CD4-positive, alpha-beta T cell (primary cell): ENCODE measurements at regions of chr10 and their contacts with region 1.

Region 1: DNA sequence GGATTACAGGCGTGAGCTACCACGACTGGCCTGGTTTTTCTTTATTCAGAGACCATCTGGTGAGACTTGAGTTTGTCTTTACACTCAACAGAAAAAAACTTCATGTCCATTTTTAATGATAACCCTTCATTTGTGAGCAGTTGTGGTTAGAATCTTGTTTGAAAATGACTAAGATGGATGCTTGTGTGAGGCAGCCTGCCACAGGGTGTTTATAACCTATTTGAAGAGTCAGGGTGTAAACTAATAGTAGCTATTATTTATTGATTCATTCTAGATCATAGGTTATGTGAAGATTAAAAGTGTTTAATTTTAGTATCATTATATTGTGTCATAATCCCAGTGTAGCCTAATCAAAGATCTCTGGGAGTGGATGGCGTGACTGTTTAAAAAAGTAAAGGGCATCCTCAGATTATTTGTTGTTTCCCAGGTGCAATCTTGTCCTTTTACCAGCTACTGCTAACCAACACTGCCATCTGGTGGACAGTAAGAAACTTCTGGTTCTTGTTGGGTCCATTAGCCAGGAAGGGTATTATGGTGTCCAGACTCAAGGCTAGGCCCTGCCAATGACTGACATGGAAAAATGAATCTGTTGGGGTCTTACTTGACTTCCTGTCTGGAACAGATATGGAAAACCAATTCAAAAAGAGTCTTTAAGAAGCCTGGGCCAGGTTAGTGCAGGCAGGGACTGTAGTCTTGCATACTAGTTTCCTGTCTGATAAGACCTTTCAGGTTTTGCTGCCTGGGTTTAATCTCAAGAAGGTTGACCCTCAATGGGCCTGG is 24.9 kb downstream of the NRBF2 start:
- DNase-seq: peak in 11 of 14 experiments; percentile 10 to 89 (median 36)
- ATAC-seq: peak; percentile 75
- H3K4me3 ChIP-seq: no peak overlapping the region
- H3K4me3 Mint-ChIP-seq: no peak overlapping the region
- H3K27ac ChIP-seq: no peak overlapping the region
- H3K27ac Mint-ChIP-seq: no peak overlapping the region
- H3K4me1 ChIP-seq: no peaks in the 10 kb centered on the region
- H3K4me1 Mint-ChIP-seq: peaks cover 14% of the 10 kb centered on the region
- H3K27me3 ChIP-seq: no peaks in the 10 kb centered on the region
- H3K27me3 Mint-ChIP-seq: no peaks in the 10 kb centered on the region
- CTCF ChIP-seq: peak; percentile 94

Region 2: GRCh38 chr10:62437696-62438095 is 720.3 kb before region 1 on chr10:
- CTCF ChIA-PET with region 1: interaction called, 17 read pairs
- POLR2A ChIA-PET with region 1: no interaction called
- intact Hi-C with region 1: loop called (anchors 1 kb)
- DNase-seq: peak in 5 of 14 experiments; percentile 0 to 74 (median 73)
- ATAC-seq: peak; percentile 59
- H3K4me3 ChIP-seq: no peak overlapping the region
- H3K4me3 Mint-ChIP-seq: no peak overlapping the region
- H3K27ac ChIP-seq: no peak overlapping the region
- H3K27ac Mint-ChIP-seq: no peak overlapping the region
- H3K4me1 ChIP-seq: no peaks in the 10 kb centered on the region
- H3K4me1 Mint-ChIP-seq: no peaks in the 10 kb centered on the region
- H3K27me3 ChIP-seq: no peaks in the 10 kb centered on the region
- H3K27me3 Mint-ChIP-seq: peaks cover 7% of the 10 kb centered on the region
- CTCF ChIP-seq: peak; percentile 83

Region 3: DNA sequence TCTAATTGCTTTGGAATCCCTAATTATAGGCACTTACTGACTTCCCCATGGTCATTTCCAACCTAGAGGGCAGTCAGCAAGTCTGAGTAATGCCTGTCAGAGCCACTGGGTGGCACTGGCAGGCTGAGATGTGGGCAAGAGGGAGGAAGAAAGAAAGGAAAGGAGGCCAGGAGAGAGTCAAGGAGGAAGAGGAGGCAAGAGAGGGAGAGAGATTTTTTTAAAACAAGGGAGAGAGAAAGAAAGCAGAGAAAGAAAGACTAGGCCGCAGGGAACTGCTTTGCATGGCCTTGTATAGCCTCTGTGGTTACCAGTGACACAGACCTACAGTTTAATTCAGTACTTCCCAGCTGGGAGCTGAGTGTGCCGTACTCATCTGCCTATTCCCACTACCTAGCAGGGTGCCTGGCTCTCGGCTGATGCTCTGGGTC is 563.9 kb before region 1 on chr10:
- CTCF ChIA-PET with region 1: interaction called, 8 read pairs
- POLR2A ChIA-PET with region 1: no interaction called
- intact Hi-C with region 1: loop called (anchors 1 kb)
- DNase-seq: peak; percentile 14 to 74 (median 38)
- ATAC-seq: peak; percentile 65
- H3K4me3 ChIP-seq: no peak overlapping the region
- H3K4me3 Mint-ChIP-seq: no peak overlapping the region
- H3K27ac ChIP-seq: no peak overlapping the region
- H3K27ac Mint-ChIP-seq: no peak overlapping the region
- H3K4me1 ChIP-seq: no peaks in the 10 kb centered on the region
- H3K4me1 Mint-ChIP-seq: no peaks in the 10 kb centered on the region
- H3K27me3 ChIP-seq: no peaks in the 10 kb centered on the region
- H3K27me3 Mint-ChIP-seq: no peaks in the 10 kb centered on the region
- CTCF ChIP-seq: peak; percentile 93

Region 4: GRCh38 chr10:63003816-63004453 is 154.1 kb before region 1 on chr10:
- CTCF ChIA-PET with region 1: no interaction called
- POLR2A ChIA-PET with region 1: no interaction called
- intact Hi-C with region 1: loop called (anchors 5 to 10 kb)
- DNase-seq: peak in 2 of 14 experiments; percentile 5 to 17
- ATAC-seq: no peak
- H3K4me3 ChIP-seq: no peak overlapping the region
- H3K4me3 Mint-ChIP-seq: no peak overlapping the region
- H3K27ac ChIP-seq: no peak overlapping the region
- H3K27ac Mint-ChIP-seq: no peak overlapping the region
- H3K4me1 ChIP-seq: no peaks in the 10 kb centered on the region
- H3K4me1 Mint-ChIP-seq: no peaks in the 10 kb centered on the region
- H3K27me3 ChIP-seq: peaks cover 0 to 3% of the 10 kb centered on the region in 2 experiments
- H3K27me3 Mint-ChIP-seq: peaks cover 20% of the 10 kb centered on the region
- CTCF ChIP-seq: peak; percentile 20

Region 5: GRCh38 chr10:63133056-63133820 is 24.8 kb before region 1 on chr10 and contains the start of gene NRBF2:
- CTCF ChIA-PET with region 1: interaction called, 6 read pairs
- POLR2A ChIA-PET with region 1: interaction called, 15 read pairs
- intact Hi-C with region 1: no loop called
- DNase-seq: peak; percentile 91 to 99 (median 95)
- ATAC-seq: peak; percentile 90
- H3K4me3 ChIP-seq: peak within 1 kb of the TSS; percentile 89
- H3K4me3 Mint-ChIP-seq: peak within 1 kb of the TSS; percentile 94
- H3K27ac ChIP-seq: peak within 1 kb of the TSS; percentile 97 to 98
- H3K27ac Mint-ChIP-seq: peak within 1 kb of the TSS; percentile 88
- H3K4me1 ChIP-seq: peaks cover 44% of the 10 kb centered on the region
- H3K4me1 Mint-ChIP-seq: peaks cover 45% of the 10 kb centered on the region
- H3K27me3 ChIP-seq: no peaks in the 10 kb centered on the region
- H3K27me3 Mint-ChIP-seq: peaks cover 9% of the 10 kb centered on the region
- CTCF ChIP-seq: peak; percentile 22
- total RNA-seq, gene NRBF2: 25.3 to 25.6 TPM